ENCODE measurements at regions of chr2 and their contacts with region 1.

Region 1: GRCh38 chr2:128027801-128028667 is at the start of gene SAP130:
- DNase-seq: peak; percentile 99
- H3K4me3 ChIP-seq: peak within 1 kb of the TSS; percentile 94 to 100 (median 98)
- H3K27ac ChIP-seq: peak within 1 kb of the TSS; percentile 94 to 100 (median 98)
- H3K4me1 ChIP-seq: peaks cover 6 to 38% (median 25%) of the 10 kb centered on the region in 6 donors
- H3K27me3 ChIP-seq: no peaks in the 10 kb centered on the region
- CTCF ChIP-seq: peak in 3 of 11 experiments; percentile 5 to 12 (median 7)
- POLR2A ChIP-seq: peak; percentile 6 to 34 (median 22)
- total RNA-seq, gene SAP130: 13.2 to 23.5 (median 17.8) TPM

Region 2: DNA sequence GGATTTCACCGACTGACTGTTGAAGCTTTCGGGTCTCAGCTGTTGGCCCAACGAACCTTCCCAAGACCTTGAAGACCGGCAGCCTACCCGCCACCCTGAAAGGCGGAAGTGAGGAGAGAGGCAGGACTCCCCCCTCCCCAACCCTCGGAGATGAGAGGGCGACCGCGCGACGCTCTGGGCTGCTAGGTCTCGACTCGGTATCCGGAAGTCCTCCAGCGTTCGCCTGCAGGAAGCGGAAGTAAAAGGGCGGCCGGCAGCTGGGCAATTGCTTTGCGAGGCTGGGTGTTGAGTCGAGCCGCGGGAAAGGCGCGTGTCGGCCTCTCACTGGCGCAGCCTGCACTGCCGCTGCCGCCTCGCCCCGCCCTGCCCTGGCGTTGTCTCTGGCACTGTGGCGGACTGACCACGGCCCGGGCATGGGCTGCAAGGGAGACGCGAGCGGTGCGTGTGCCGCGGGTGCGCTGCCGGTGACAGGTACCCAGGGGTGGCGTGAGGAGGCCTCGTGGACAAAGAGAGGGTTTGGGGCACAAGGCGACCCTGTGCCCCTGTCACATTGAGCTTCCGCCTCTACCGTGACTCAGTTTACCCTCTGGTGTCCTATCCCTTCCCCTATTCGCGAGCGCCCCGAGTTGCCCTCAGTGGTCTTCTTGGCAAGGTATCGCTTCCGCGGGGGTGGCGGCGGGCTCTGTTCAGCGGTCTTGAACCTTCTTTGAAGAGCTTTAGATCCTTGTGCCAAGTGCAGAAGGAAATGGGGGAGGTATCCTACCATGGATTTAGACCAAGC is 63.1 kb after region 1 on chr2 and contains the start of gene UGGT1:
- intact Hi-C with region 1: loop called (anchors 5 kb)
- DNase-seq: peak; percentile 99
- H3K4me3 ChIP-seq: peak within 1 kb of the TSS; percentile 93 to 100 (median 98)
- H3K27ac ChIP-seq: peak within 1 kb of the TSS; percentile 79 to 94 (median 86)
- H3K4me1 ChIP-seq: peaks cover 15 to 55% (median 47%) of the 10 kb centered on the region in 6 donors
- H3K27me3 ChIP-seq: no peaks in the 10 kb centered on the region
- CTCF ChIP-seq: peak in 3 of 11 experiments; percentile 16 to 26 (median 16)
- POLR2A ChIP-seq: peak in 2 of 3 donors; percentile 54 to 60
- total RNA-seq, gene UGGT1: 43.9 to 64.6 (median 50.0) TPM

Region 3: DNA sequence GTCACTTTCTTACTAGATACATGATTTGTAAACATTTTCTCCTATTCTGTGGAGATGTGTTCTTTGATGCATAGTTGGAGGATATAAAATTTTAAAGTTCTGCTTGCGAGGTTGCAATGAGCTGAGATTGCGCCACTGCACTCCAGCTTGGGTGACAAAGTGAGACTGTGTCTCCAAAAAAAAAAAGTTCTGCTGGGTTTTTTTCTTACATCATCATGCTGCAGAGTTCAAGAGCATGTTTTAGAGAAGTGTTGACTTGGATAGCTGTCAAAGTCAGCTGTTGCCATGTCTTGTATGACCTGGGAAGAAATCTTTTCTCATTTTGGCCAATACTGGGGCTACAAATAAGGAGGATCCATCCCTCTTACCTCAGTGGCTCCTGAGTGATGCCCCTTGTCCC is 134.2 kb after region 1 on chr2:
- intact Hi-C with region 1: no loop called
- DNase-seq: no peak
- H3K4me3 ChIP-seq: peak overlapping the region in 1 of 8 donors; percentile 39
- H3K27ac ChIP-seq: peak overlapping the region in 7 of 8 donors; percentile 57 to 93 (median 86)
- H3K4me1 ChIP-seq: peaks cover 0 to 29% (median 0%) of the 10 kb centered on the region in 6 donors
- H3K27me3 ChIP-seq: no peaks in the 10 kb centered on the region
- CTCF ChIP-seq: no peak
- POLR2A ChIP-seq: no peak

Measured in spleen (tissue), 13 donors.